Left cardiac atrium (tissue), 4 donors: ENCODE measurements at regions of chr16 and their contacts with region 1.

Region 1: GRCh38 chr16:28846080-28846932 is at the start of gene TUFM:
- DNase-seq: peak; percentile 98
- ATAC-seq: peak; percentile 97 to 98
- total RNA-seq, gene TUFM: 167 to 183 TPM

Region 2: GRCh38 chr16:28943281-28943680 is 97.0 kb after region 1 on chr16:
- intact Hi-C with region 1: loop called in 1 of 2 experiments (anchors 10 kb)
- DNase-seq: no peak
- ATAC-seq: no peak